Left lung (tissue), 14 donors: ENCODE measurements at regions of chr16 and their contacts with region 1.

Region 1: DNA sequence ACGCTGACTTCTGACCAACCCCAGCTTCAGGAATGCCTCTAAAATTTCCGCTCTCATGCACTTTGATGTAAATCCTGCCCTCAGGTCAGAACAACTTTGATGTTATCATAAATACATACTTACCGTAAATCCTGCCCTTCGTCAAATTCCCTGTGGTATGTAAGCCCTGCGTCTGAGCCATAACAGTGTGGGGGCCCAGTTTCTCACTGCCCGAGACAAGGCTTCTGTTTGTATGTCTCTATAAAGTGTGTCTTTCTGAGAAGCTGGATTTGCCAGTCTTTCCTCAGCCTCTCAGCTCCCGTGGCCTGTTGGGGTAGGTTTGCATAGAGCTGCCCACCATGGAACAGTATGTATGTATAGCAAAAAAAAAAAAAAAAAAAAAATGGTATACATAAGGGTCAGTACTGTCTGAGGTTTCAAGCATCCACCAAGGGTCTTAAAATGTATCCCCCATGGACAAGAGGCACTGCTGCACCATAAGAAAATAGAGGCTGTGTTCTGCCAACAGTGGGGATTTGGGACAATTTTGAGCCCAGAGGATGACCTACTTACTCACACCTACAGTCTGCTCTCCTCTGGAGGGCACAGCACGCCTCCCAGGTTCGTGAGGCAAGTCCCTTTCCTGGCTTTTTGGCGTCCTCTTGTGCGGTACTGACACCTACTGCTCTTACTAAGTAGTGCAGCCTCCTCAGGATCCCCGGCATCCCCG is 17.5 kb downstream of the PRMT7 start:
- DNase-seq: peak in 3 of 4 donors; percentile 79 to 87 (median 82)
- ATAC-seq: peak; percentile 91
- H3K4me3 ChIP-seq: no peak overlapping the region
- H3K27ac ChIP-seq: no peak overlapping the region
- H3K4me1 ChIP-seq: peaks cover 16 to 22% of the 10 kb centered on the region in 2 donors
- H3K27me3 ChIP-seq: no peaks in the 10 kb centered on the region
- CTCF ChIP-seq: peak; percentile 85 to 96

Region 2: GRCh38 chr16:68074850-68075555 is 253.3 kb before region 1 on chr16:
- intact Hi-C with region 1: no loop called
- DNase-seq: peak in 1 of 4 donors; percentile 54
- ATAC-seq: no peak
- H3K4me3 ChIP-seq: no peak overlapping the region
- H3K27ac ChIP-seq: peak overlapping the region in 1 of 2 donors; percentile 3
- H3K4me1 ChIP-seq: peaks cover 15 to 54% of the 10 kb centered on the region in 2 donors
- H3K27me3 ChIP-seq: no peaks in the 10 kb centered on the region
- CTCF ChIP-seq: no peak

Region 3: DNA sequence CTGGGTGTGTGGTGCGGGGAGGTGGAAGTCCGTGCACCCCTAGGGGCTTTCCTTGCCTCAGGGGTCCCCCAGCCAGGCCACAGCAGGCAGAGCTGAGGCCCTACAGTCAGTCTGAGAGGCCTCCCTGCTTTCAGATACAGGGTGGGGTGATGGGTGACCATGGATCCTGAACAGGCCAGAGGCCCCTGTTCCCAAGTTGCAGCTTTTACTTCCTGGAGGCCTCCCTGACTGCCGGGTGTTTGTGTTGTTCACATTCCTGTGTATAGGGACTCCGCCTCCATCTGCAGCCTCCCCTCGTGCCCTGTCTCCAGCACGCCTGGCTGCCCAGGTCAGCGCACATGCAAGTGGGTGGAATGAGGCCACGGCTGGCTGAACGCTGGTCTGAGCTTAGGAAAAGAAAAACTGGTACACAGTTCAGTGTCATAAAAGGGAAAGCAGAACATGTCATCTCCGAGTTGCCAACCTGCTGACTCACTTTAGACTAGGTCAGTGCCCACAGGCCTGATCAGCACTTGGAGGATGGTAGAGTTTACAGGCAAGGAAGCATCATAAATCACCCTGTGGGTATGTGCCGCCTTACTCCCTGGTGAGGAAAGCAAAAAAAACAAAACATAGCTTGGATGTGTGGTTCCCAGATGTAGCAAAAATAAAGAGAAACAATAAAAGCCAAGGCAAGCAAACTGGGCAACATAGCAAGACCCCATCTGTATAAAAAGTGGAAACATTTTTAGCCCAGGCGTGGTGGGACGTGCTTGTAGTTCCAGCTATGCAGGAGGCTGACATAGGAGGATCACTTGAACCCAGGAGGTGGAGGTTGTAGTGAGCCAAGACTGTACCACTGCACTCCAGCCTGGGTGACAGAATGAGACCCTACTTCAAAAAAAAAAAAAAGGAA is 70.2 kb before region 1 on chr16:
- intact Hi-C with region 1: loop called (anchors 5 to 10 kb)
- DNase-seq: no peak
- ATAC-seq: peak; percentile 35
- H3K4me3 ChIP-seq: no peak overlapping the region
- H3K27ac ChIP-seq: peak overlapping the region in 1 of 2 donors; percentile 3
- H3K4me1 ChIP-seq: peaks cover 0 to 18% of the 10 kb centered on the region in 2 donors
- H3K27me3 ChIP-seq: no peaks in the 10 kb centered on the region
- CTCF ChIP-seq: no peak

Region 4: DNA sequence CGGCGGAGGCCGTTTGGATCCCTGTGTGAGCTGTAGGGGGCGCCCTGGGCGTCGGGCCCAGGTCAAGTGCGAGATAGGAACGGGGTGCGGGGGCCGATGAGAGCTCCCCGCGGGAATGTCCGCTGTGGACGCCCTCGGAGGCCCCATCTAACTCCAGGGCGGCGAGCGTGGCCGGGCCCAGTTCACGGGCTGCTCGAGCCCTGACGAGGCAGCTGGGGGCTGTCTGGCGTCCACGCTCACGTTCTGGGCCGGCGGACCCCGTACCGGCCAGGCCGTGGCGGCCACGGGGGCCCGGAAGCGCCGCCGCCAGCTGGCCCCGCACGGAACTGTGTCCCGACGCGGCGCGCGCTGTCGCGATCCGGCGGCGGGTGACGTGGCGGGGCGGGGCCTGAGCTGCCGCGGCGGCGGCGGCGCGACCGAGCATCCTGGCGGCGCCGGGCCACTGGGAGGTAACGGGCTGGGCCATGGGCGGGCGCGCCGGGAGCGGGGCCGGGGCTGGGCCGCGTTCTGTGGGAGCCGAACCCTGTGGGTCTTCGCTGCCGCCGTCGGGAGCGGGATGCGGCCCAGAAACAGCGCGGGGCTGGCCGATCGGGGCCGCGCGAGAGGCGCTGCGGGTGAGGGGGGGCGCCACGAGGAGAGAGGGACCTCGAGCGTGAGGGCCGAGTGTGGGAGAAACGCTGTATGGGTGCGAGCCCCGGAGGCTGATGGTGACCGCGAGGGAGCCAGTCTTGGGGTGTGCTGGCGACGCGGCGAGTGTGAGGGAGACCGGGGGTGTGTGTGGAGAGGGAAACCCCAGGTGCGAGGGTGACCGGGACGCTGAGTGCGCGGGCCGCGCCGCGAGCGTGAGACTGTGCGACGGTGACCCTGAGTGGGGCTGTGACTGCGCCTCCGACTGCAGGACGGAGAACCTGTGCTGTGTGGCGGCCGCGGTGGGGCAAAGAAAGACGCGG is 63.9 kb before region 1 on chr16 and contains the start of gene SLC7A6:
- intact Hi-C with region 1: loop called (anchors 5 to 10 kb)
- DNase-seq: peak; percentile 50 to 96 (median 74)
- ATAC-seq: peak; percentile 81
- H3K4me3 ChIP-seq: peak within 1 kb of the TSS; percentile 85 to 88
- H3K27ac ChIP-seq: peak within 1 kb of the TSS; percentile 96
- H3K4me1 ChIP-seq: peaks cover 16 to 38% of the 10 kb centered on the region in 2 donors
- H3K27me3 ChIP-seq: no peaks in the 10 kb centered on the region
- CTCF ChIP-seq: peak; percentile 76 to 78
- polyA plus RNA-seq, gene SLC7A6: 9.6 to 15.5 (median 10.4) TPM